ENCODE measurements at regions of chr1 and their contacts with region 1.

Region 1: DNA sequence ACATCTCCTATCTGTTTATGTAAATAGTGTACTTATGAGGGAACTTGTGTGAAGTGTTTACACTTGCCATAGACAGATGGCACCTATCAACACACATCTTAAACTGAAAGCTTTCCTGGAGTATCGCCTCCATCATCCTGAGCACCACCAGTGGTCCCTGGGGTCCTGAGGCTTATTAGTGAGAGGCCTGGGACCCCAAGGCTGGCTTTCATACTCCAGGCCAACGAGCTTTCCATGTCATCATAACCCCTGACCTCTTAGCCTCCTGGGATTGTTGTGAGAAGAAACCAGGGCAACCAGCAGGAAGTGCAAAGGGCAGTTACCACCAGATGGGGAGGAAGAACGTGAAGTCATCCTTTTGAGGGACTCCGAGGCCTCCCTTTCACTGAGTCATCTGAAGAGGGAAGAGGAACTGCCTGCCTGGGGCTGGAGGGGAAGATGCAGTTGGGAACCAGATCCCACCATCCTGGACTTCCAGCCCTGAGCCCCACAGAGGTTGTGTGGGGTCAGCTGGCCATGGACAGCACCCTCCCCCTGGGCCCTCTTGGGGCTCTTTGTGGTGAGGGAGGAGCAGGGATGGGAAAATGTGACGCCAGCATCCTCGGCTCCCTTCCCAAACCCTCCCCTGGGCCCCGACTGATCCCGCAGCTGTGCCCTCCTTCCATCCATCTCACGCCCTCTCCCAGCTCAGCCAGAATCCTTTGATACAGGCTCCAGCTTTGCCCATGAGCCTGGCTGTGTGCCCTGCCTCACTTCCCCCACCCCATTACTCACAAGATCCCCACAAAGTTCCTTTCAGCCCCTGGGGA is 5.8 kb downstream of the INKA2 start:
- DNase-seq: peak; percentile 71 to 90 (median 88)
- H3K4me3 ChIP-seq: peak overlapping the region in 1 of 7 experiments; percentile 17
- H3K27ac ChIP-seq: peak overlapping the region; percentile 33 to 50
- H3K4me1 ChIP-seq: peaks cover 6 to 33% (median 26%) of the 10 kb centered on the region in 4 experiments
- H3K27me3 ChIP-seq: no peaks in the 10 kb centered on the region

Region 2: DNA sequence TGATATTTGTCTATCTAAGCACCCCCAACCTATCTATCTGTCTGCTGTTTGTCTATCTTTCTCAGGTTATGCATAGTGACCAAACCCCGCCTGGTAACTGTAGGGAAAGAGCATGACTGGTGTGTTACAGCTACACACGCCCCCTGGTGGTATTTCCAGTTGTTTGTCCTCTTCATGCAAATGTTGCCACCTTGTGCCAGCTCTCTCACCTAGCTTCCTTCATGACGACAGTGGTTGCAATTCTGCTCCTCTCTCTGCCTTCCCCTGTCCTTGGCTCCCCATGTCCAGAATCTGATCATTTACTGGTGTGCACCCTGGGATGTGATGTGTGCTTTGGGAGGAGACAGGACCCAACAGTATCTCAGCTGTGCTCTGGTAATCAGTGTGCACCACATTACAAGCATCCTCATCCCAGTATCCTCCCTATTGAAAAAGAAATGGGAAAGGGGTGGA is 13.9 kb after region 1 on chr1:
- CTCF ChIA-PET with region 1: interaction called, 20 read pairs
- POLR2A ChIA-PET with region 1: interaction called, 3 read pairs
- DNase-seq: peak; percentile 74 to 85 (median 81)
- H3K4me3 ChIP-seq: no peak overlapping the region
- H3K27ac ChIP-seq: no peak overlapping the region
- H3K4me1 ChIP-seq: peaks cover 0 to 19% (median 8%) of the 10 kb centered on the region in 4 experiments
- H3K27me3 ChIP-seq: peaks cover 0 to 6% (median 1%) of the 10 kb centered on the region in 5 experiments

Region 3: DNA sequence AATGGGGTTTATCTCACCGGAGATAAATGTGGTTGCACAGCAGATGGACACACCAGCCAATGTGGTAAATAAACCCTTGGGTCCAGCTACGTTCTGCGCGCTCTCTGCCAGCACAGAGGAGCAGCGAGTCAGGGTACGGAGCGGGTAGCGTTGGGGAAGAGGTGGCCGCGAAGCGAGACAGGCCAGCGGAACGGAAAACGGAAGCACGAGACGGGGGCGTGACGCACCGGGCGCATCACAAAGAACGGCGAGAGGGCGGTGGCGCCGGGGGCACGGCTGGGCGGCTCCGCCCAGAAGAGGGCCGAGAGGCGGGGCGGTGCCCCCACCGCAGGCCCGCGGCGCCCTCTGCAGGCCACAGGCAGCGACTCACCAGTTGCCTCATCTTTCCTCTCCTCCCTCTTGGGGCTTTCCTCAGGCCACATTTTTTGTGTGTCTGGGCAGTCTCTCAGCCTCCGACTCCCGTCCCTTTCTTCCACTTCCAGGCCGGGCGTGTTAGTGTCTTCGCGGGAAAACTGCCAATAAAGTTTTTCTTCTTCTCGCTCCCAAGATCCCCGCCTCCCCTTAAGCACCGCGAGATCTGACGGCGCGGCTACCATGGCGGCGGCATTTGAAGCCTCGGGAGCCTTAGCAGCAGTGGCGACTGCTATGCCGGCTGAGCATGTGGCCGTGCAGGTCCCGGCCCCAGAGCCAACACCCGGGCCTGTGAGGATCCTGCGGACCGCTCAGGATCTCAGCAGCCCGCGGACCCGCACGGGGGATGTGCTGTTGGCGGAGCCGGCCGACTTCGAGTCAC is 22.1 kb after region 1 on chr1 and contains the start of gene DDX20:
- CTCF ChIA-PET with region 1: interaction called, 39 read pairs
- POLR2A ChIA-PET with region 1: interaction called, 3 read pairs
- DNase-seq: peak; percentile 96 to 98 (median 98)
- H3K4me3 ChIP-seq: peak within 1 kb of the TSS; percentile 57 to 92 (median 85)
- H3K27ac ChIP-seq: peak within 1 kb of the TSS; percentile 92 to 96
- H3K4me1 ChIP-seq: peaks cover 6 to 31% (median 19%) of the 10 kb centered on the region in 4 experiments
- H3K27me3 ChIP-seq: no peaks in the 10 kb centered on the region

Region 4: GRCh38 chr1:111789666-111790316 is 56.4 kb after region 1 on chr1:
- CTCF ChIA-PET with region 1: no interaction called
- POLR2A ChIA-PET with region 1: no interaction called
- DNase-seq: peak; percentile 8 to 10 (median 8)
- H3K4me3 ChIP-seq: no peak overlapping the region
- H3K27ac ChIP-seq: no peak overlapping the region
- H3K4me1 ChIP-seq: no peaks in the 10 kb centered on the region
- H3K27me3 ChIP-seq: peaks cover 2 to 13% (median 6%) of the 10 kb centered on the region in 5 experiments

Region 5: GRCh38 chr1:111904478-111905218 is 171.3 kb after region 1 on chr1:
- CTCF ChIA-PET with region 1: no interaction called
- POLR2A ChIA-PET with region 1: no interaction called
- DNase-seq: no peak
- H3K4me3 ChIP-seq: no peak overlapping the region
- H3K27ac ChIP-seq: no peak overlapping the region
- H3K4me1 ChIP-seq: no peaks in the 10 kb centered on the region
- H3K27me3 ChIP-seq: peaks cover 0 to 28% (median 14%) of the 10 kb centered on the region in 5 experiments

Measured in common myeloid progenitor, CD34-positive (primary cell).